ENCODE measurements at regions of chr11 and their contacts with region 1.

Region 1: DNA sequence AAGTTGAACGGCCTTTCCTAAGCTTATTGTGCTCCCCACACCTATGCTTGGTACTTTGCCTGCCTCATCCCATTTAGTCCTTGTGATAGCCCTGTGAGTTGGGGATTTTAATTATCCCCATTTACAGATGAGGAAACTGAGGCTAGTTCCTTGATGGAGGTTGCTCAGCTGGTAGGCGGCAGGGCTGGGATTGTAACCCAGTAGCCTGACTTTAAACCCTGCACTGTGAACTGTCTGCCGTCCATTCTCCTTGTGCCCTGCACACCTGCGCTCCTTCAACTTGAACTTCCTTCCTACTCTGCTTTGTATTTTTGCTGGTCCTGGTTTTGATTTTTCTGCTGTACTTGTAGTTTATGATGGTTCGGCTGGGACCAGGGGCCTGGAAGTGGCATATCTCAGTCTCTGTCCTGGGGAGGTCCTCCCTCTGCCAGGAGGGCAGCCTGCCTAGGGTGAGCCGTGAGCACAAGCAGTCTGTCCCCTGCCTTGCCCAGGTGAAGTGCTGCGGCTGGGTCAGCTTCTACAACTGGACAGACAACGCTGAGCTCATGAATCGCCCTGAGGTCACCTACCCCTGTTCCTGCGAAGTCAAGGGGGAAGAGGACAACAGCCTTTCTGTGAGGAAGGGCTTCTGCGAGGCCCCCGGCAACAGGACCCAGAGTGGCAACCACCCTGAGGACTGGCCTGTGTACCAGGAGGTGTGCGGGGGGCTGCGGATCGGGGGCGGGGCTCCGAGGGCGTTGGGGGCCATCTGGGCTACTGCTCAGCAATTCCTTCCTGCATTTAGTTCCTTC is 52.4 kb downstream of the CD82 start:
- DNase-seq: no peak
- ATAC-seq: no peak
- H3K4me3 Mint-ChIP-seq: no peak overlapping the region
- H3K27ac Mint-ChIP-seq: peak overlapping the region in 1 of 10 donors; percentile 45
- H3K4me1 Mint-ChIP-seq: peaks cover 17 to 33% (median 29%) of the 10 kb centered on the region in 4 donors
- H3K27me3 Mint-ChIP-seq: no peaks in the 10 kb centered on the region

Region 2: DNA sequence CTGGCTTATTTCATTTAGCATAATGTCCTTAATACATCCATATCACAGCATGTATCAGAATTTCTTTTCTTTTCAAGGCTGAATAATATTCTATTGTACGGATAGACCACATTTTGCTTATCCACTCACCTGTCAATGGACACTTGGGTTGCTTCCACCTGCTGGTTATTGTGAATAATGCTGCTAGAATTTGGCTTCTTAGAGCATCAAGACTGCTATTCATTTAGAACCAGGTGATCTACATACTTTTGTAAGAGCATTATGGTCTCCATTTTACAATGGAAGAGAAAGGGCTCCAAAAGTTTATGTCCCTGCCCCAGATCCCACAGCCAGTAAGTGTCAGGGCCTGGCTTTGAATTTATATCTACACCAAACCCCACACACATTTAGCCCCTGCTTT is 153.1 kb before region 1 on chr11:
- POLR2A ChIA-PET with region 1: no interaction called
- DNase-seq: no peak
- ATAC-seq: no peak
- H3K4me3 Mint-ChIP-seq: no peak overlapping the region
- H3K27ac Mint-ChIP-seq: no peak overlapping the region
- H3K4me1 Mint-ChIP-seq: no peaks in the 10 kb centered on the region
- H3K27me3 Mint-ChIP-seq: peaks cover 3 to 24% (median 14%) of the 10 kb centered on the region in 5 donors

Region 3: DNA sequence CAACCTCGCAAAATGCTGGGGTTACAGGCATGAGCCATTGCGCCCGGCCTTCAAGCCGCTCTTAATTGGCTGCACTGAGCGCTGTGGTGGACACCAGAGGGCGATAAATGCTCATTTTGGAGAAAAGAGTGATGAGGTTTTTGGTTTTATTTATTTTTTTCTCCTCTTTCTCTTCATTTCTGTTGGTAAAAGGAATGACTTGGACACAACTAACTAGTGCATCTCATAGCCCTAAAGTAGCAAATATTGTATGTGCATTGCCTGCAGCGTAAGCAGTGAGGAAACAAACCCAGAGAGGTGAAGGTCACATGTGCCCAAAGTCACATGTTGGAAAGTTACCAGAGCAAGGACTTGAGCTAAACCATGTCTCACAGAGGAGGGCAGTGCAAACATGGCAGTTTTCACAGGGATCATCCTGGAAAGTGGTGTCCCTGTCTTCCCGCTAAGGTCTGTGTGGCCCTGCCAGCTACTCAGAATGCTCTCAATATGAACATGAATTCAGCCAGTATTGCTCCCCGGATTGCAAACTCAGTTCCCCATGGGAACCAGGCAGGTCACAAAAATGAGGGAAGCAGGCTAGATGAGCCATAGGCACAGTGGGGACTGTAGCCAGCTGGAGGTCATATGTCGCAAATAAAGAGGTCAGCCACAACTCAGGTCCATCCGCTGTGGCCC is 61.0 kb before region 1 on chr11:
- POLR2A ChIA-PET with region 1: interaction called, 32 read pairs
- DNase-seq: peak; percentile 38 to 82 (median 61)
- ATAC-seq: peak; percentile 70 to 79
- H3K4me3 Mint-ChIP-seq: no peak overlapping the region
- H3K27ac Mint-ChIP-seq: peak overlapping the region in 6 of 10 donors; percentile 19 to 80 (median 70)
- H3K4me1 Mint-ChIP-seq: peaks cover 9 to 41% (median 19%) of the 10 kb centered on the region in 4 donors
- H3K27me3 Mint-ChIP-seq: peaks cover 0 to under 1% (median 0%) of the 10 kb centered on the region in 5 donors

Region 4: GRCh38 chr11:44658506-44658850 is 40.6 kb after region 1 on chr11:
- POLR2A ChIA-PET with region 1: no interaction called
- DNase-seq: peak in 1 of 10 donors; percentile 15
- ATAC-seq: no peak
- H3K4me3 Mint-ChIP-seq: no peak overlapping the region
- H3K27ac Mint-ChIP-seq: peak overlapping the region in 3 of 10 donors; percentile 2 to 47 (median 22)
- H3K4me1 Mint-ChIP-seq: peaks cover 4 to 14% (median 11%) of the 10 kb centered on the region in 4 donors
- H3K27me3 Mint-ChIP-seq: peaks cover 0 to 9% (median 3%) of the 10 kb centered on the region in 5 donors

Region 5: DNA sequence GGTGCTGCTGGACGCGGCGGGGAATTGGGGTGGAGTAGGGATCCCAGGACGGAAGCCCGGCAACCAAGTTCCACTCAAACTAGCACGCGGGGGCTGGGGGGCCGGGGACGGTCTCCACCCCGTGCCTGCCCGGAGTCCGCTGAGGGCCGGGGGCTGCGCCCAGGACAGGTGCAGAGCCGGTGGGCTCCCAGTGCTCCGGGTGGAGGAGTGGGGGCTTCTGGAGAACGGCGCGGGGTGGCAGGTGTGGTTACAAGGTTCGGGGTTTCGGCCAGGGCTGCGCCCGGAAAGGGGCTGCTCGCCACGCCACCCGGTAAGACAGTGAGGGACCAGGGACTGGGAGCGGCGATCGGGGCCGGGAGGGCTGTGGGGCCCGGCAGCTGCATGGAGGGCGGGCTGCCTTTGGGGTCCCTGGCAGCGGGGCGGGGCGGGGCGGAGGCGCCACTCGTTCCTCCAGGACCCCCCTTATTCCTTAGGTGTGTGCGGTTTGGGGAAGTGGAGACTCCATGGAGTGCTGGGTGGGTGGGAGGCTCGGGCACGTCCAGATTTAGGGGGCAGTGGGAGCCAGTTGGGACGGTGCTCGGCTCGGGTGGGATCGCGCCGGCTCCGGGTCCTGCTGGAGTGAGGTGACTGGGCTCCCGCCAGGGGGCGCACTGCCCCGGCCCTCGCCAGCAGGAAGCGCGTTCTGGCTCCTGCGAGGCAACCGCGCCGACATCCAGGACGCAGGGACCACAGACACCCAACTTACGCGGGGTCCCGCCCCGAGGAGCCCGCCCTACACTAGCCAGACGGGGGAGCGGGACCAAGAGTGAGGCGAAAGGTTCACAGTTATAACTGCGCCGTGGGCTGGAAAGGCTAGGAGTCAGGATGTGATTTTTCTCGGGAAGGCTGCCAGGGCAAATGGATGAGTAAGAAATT is 109.8 kb after region 1 on chr11:
- POLR2A ChIA-PET with region 1: no interaction called
- DNase-seq: peak; percentile 56 to 83 (median 72)
- ATAC-seq: peak; percentile 82 to 84
- H3K4me3 Mint-ChIP-seq: peak overlapping the region; percentile 79 to 93 (median 84)
- H3K27ac Mint-ChIP-seq: peak overlapping the region in 7 of 10 donors; percentile 56 to 89 (median 63)
- H3K4me1 Mint-ChIP-seq: peaks cover 13 to 35% (median 29%) of the 10 kb centered on the region in 4 donors
- H3K27me3 Mint-ChIP-seq: peaks cover 0 to 21% (median 2%) of the 10 kb centered on the region in 5 donors